IMR-90 (cell line): ENCODE measurements at regions of chr9 and their contacts with region 1.

Region 1: DNA sequence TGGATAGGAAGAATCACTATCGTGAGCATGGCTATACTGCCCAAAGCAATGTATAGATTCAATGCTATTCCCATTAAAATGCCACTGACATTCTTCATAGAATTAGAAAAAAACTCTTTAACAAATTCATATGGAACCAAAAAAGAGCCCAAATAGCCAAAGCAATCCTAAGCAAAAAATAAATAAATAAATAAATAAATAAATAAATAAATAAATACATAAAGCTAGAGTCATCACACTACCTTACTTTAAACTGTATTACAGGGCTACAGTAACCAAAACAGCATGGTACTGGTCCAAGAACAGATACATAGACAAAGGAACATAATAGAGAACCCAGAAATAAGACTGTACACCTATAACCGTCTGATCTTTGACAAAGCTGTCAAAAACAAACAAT is 180.4 kb upstream of the CDKN2B start:
- DNase-seq: no peak
- ATAC-seq: no peak
- H3K4me3 ChIP-seq: no peak overlapping the region
- H3K27ac ChIP-seq: no peak overlapping the region
- H3K4me1 ChIP-seq: no peaks in the 10 kb centered on the region
- H3K27me3 ChIP-seq: peaks cover 5% of the 10 kb centered on the region; the same call in 1 of the 2 replicates
- CTCF ChIP-seq: no peak
- POLR2A ChIP-seq: no peak
- RAD21 ChIP-seq: no peak

Region 2: GRCh38 chr9:22124263-22125011 is 65.0 kb before region 1 on chr9:
- CTCF ChIA-PET with region 1: no interaction called
- POLR2A ChIA-PET with region 1: no interaction called
- dilution Hi-C with region 1: no loop called
- in situ Hi-C with region 1: no loop called
- intact Hi-C with region 1: no loop called
- DNase-seq: peak; percentile 61
- ATAC-seq: peak; percentile 24; the same call in 1 of the 2 replicates
- H3K4me3 ChIP-seq: no peak overlapping the region
- H3K27ac ChIP-seq: no peak overlapping the region
- H3K4me1 ChIP-seq: peaks cover 2% of the 10 kb centered on the region; the same call in 1 of the 2 replicates
- H3K27me3 ChIP-seq: no peaks in the 10 kb centered on the region
- CTCF ChIP-seq: no peak
- POLR2A ChIP-seq: no peak
- RAD21 ChIP-seq: no peak

Region 3: DNA sequence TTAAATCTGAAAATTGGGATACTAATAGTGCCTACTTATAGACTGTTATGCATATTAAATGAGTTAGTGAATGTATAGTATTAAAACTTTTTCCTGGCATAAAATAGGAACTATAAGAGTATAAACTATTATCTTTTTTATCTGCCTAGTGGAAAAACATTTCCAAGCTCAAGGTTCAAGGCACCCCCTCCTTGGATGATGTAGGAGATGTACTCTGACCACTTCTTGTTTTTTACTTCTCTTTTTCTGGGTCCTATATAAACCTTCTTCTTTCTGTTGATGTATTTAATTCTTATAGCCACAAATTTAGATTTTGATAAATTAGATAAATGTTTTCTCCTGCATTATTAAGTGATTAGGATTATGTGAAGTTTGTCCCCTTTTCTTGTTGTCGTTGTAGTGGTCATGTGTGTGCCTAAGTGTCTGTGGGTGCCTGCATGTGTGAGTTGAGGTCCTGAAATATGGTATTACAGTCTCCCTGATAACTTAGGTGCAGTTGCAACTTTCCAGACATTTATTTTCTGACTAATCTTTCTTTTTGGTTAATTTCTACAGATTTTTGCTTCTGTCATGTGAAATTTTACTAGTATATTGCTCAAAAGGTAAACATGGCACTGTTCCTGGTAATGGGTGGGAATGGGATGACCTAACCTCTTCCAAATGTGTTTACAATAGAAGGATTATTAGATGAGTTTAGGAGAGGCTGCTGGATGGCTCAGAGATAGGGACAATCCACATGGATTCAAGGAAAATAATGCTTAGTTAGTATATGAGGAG is 19.6 kb before region 1 on chr9:
- CTCF ChIA-PET with region 1: no interaction called
- POLR2A ChIA-PET with region 1: no interaction called
- dilution Hi-C with region 1: no loop called
- in situ Hi-C with region 1: no loop called
- intact Hi-C with region 1: no loop called
- DNase-seq: peak; percentile 89
- ATAC-seq: peak; percentile 85
- H3K4me3 ChIP-seq: no peak overlapping the region
- H3K27ac ChIP-seq: 0 out of 2 replicates have a peak overlapping the region, but pooled peaks have one; percentile 57
- H3K4me1 ChIP-seq: peaks cover 9% of the 10 kb centered on the region
- H3K27me3 ChIP-seq: no peaks in the 10 kb centered on the region
- CTCF ChIP-seq: no peak
- POLR2A ChIP-seq: no peak
- RAD21 ChIP-seq: no peak

Region 4: GRCh38 chr9:22203371-22204138 is 14.1 kb after region 1 on chr9:
- CTCF ChIA-PET with region 1: interaction called, 10 read pairs
- POLR2A ChIA-PET with region 1: no interaction called
- dilution Hi-C with region 1: no loop called
- in situ Hi-C with region 1: no loop called
- intact Hi-C with region 1: no loop called
- DNase-seq: peak; percentile 54
- ATAC-seq: peak; percentile 49
- H3K4me3 ChIP-seq: no peak overlapping the region
- H3K27ac ChIP-seq: no peak overlapping the region
- H3K4me1 ChIP-seq: peaks cover 2% of the 10 kb centered on the region; the same call in 1 of the 2 replicates
- H3K27me3 ChIP-seq: 0 out of 2 replicates have a peak, but pooled peaks cover 2% of the 10 kb centered on the region
- CTCF ChIP-seq: no peak
- POLR2A ChIP-seq: no peak
- RAD21 ChIP-seq: no peak